Mammary epithelial cell (primary cell): ENCODE measurements at regions of chr1 and their contacts with region 1.

Region 1: GRCh38 chr1:22064751-22065402 is 12.4 kb downstream of the CDC42 start:
- DNase-seq: no peak
- H3K4me3 ChIP-seq: no peak overlapping the region
- H3K27ac ChIP-seq: no peak overlapping the region
- H3K4me1 ChIP-seq: peaks cover 19% of the 10 kb centered on the region
- H3K27me3 ChIP-seq: no peaks in the 10 kb centered on the region
- CTCF ChIP-seq: no peak

Region 2: GRCh38 chr1:21631944-21632887 is 432.7 kb before region 1 on chr1:
- CTCF ChIA-PET with region 1: no interaction called
- dilution Hi-C with region 1: no loop called
- in situ Hi-C with region 1: no loop called
- intact Hi-C with region 1: no loop called
- DNase-seq: no peak
- H3K4me3 ChIP-seq: no peak overlapping the region
- H3K27ac ChIP-seq: no peak overlapping the region
- H3K4me1 ChIP-seq: no peaks in the 10 kb centered on the region
- H3K27me3 ChIP-seq: no peaks in the 10 kb centered on the region
- CTCF ChIP-seq: no peak

Region 3: DNA sequence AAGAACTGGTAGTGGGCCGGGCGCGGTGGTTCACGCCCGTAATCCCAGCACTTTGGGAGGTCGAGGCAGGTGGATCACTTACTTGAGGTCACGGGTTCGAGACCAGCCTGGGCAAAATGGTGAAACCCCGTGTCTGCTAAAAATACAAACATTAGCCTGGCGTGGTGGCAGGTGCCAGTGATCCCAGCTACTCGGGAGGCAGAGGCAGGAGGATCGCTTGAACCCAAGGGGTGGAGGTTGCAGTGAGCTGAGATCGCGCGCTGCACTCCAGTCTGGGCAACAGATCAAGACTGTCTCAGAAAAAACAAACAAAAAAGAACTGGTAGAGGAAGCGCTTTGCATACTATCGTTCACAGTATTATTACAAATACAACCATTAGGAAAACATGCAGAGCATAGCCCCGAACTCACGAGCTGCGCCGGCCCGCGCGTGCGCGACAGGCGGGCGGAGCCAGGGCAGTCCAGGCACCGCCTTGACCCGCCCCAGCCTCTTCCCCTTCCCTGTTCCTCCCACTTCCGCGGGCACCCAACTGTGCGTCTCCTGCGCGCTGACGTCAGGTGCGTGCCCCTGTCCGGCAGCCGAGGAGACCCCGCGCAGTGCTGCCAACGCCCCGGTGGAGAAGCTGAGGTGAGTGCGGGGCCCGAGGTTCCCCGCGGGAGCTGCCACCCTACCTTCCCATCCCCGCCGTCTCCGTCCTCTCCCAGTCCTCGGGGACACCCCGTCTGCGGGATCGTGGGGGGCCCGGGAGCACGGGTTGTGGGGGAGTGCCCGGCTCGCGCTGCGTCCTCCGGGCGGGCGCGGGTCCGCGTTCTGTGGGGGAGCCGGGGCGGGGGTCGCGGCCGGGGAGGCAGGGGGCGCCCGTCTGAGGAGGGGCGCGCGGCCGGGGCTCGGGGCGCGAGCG is 12.5 kb before region 1 on chr1 and contains the start of gene CDC42:
- CTCF ChIA-PET with region 1: no interaction called
- dilution Hi-C with region 1: no loop called
- in situ Hi-C with region 1: no loop called
- intact Hi-C with region 1: loop called (anchors 1 kb)
- DNase-seq: peak; percentile 95
- H3K4me3 ChIP-seq: peak within 1 kb of the TSS; percentile 73 to 86 (median 77)
- H3K27ac ChIP-seq: peak within 1 kb of the TSS; percentile 79
- H3K4me1 ChIP-seq: peaks cover 15% of the 10 kb centered on the region
- H3K27me3 ChIP-seq: no peaks in the 10 kb centered on the region
- CTCF ChIP-seq: no peak
- total RNA-seq, gene CDC42: 234 to 414 TPM

Region 4: GRCh38 chr1:22114083-22115012 is 49.5 kb after region 1 on chr1:
- CTCF ChIA-PET with region 1: no interaction called
- dilution Hi-C with region 1: loop called (anchors 5 kb)
- in situ Hi-C with region 1: no loop called
- intact Hi-C with region 1: no loop called
- DNase-seq: no peak
- H3K4me3 ChIP-seq: no peak overlapping the region
- H3K27ac ChIP-seq: no peak overlapping the region
- H3K4me1 ChIP-seq: no peaks in the 10 kb centered on the region
- H3K27me3 ChIP-seq: no peaks in the 10 kb centered on the region
- CTCF ChIP-seq: no peak

Region 5: DNA sequence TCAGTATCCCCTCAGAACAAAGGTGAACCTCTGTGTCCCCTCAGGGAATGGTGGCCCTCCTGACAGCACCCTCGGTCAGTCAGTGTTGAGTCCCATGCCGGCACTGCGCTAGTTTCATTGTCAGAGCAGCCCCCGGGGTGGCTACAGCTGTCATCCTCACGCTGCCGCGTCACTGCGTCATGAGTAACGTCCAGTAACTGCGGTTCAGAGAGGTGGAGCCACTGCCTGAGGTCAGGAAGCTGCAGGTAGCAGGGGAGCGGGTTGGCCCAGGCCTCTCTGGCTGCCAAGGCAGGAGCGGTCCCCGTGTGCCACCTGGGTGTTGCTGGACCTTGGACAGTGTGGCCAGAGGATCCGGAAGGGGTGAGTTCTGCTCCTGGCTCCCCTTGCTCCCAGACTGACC is 98.3 kb after region 1 on chr1:
- CTCF ChIA-PET with region 1: no interaction called
- dilution Hi-C with region 1: no loop called
- in situ Hi-C with region 1: no loop called
- intact Hi-C with region 1: no loop called
- DNase-seq: no peak
- H3K4me3 ChIP-seq: no peak overlapping the region
- H3K27ac ChIP-seq: no peak overlapping the region
- H3K4me1 ChIP-seq: no peaks in the 10 kb centered on the region
- H3K27me3 ChIP-seq: no peaks in the 10 kb centered on the region
- CTCF ChIP-seq: no peak